ENCODE measurements at regions of chr12 and their contacts with region 1.

Region 1: DNA sequence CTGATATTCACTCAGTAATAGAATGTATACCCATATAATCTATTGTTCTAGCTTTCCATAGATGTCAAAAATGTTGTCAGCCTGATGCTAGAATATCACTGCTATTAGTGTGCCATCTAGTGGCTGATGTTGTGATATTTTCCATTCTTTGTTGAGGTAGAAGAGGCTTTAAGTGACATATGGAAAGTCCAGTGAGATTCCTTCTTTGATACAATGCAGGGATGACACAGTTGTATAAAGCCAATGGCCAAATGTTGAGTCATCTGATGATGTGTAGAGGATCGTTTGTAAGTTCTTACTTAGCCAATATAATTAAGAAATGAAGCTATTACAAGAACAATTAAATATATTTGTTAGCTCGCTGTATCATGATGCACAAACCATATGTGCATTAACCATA is 58.1 kb upstream of the PCED1B start:
- DNase-seq: no peak
- H3K4me3 ChIP-seq: no peak overlapping the region
- H3K27ac ChIP-seq: no peak overlapping the region
- H3K4me1 ChIP-seq: peaks cover 0 to 3% of the 10 kb centered on the region in 2 donors
- H3K27me3 ChIP-seq: no peaks in the 10 kb centered on the region
- CTCF ChIP-seq: peak; percentile 50 to 70 (median 55)

Region 2: DNA sequence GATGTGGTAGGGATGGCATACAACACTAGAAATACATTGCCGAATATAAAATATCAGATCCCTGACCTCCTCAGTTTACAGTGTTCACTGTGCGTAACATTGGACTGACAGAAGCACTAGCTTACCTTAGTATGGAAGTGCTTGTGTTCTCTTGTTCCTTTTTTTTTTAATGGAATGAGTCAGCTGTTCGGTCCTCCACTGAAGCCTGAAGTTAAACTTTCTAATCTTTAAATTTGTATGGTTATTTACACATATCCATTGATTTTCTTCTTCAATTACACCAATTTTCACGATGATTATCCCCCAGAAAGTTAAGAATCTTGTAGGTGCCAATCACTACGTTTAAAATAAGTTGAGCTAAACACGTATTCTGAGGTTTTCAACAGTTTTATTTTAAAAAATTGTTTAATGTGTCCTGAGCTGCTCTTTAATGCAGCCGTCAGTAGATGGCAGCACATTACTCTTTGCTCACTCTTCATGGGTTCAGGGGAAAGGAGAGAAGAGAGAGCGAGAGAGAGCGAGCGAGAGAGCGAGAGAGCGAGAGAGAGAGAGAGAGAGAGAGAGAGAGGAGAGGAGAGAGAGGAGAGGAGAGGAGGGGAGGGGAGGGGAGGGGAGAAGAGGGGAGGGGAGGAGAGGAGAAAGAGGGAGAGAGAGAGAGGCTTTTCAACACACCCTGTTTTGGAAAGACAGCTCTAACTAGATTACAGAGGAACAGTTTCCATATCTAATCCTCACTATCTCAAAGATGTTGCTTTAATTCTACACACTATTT is 896.3 kb before region 1 on chr12:
- intact Hi-C with region 1: loop called (anchors 10 kb)
- DNase-seq: peak in 1 of 2 donors; percentile 75
- H3K4me3 ChIP-seq: peak overlapping the region; percentile 18 to 44
- H3K27ac ChIP-seq: no peak overlapping the region
- H3K4me1 ChIP-seq: peaks cover 0 to 3% of the 10 kb centered on the region in 2 donors
- H3K27me3 ChIP-seq: no peaks in the 10 kb centered on the region
- CTCF ChIP-seq: peak; percentile 60 to 74 (median 72)

Region 3: GRCh38 chr12:46675736-46676135 is 345.6 kb before region 1 on chr12:
- intact Hi-C with region 1: loop called (anchors 5 kb)
- DNase-seq: no peak
- H3K4me3 ChIP-seq: peak overlapping the region in 1 of 2 donors; percentile 37
- H3K27ac ChIP-seq: no peak overlapping the region
- H3K4me1 ChIP-seq: peaks cover 0 to 4% of the 10 kb centered on the region in 2 donors
- H3K27me3 ChIP-seq: no peaks in the 10 kb centered on the region
- CTCF ChIP-seq: peak; percentile 52 to 79 (median 69)

Region 4: DNA sequence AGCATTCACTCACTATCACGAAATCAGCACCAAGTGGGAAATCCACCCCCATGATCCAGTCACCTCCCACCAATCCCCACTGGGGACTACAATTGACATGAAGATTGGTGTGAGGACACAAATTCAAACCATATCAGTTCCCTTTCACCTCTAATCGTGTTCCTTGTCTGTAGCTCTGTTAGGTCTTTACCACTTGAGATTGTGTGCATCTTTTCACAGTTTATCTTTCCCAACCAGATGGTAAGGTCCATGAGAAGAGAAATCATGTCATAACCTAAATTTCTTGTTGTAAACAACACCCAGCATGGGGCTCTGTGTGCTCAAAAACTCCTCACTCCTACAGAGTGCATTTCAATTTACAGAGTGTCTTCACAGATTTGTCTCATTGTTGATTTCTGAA is 31.0 kb after region 1 on chr12:
- intact Hi-C with region 1: no loop called
- DNase-seq: no peak
- H3K4me3 ChIP-seq: no peak overlapping the region
- H3K27ac ChIP-seq: no peak overlapping the region
- H3K4me1 ChIP-seq: no peaks in the 10 kb centered on the region
- H3K27me3 ChIP-seq: no peaks in the 10 kb centered on the region
- CTCF ChIP-seq: no peak

Region 5: GRCh38 chr12:47147739-47148138 is 126.4 kb after region 1 on chr12:
- intact Hi-C with region 1: no loop called
- DNase-seq: no peak
- H3K4me3 ChIP-seq: no peak overlapping the region
- H3K27ac ChIP-seq: peak overlapping the region; percentile 28 to 53
- H3K4me1 ChIP-seq: no peaks in the 10 kb centered on the region
- H3K27me3 ChIP-seq: no peaks in the 10 kb centered on the region
- CTCF ChIP-seq: no peak